MCF 10A (cell line): ENCODE measurements at regions of chr16 and their contacts with region 1.

Region 1: DNA sequence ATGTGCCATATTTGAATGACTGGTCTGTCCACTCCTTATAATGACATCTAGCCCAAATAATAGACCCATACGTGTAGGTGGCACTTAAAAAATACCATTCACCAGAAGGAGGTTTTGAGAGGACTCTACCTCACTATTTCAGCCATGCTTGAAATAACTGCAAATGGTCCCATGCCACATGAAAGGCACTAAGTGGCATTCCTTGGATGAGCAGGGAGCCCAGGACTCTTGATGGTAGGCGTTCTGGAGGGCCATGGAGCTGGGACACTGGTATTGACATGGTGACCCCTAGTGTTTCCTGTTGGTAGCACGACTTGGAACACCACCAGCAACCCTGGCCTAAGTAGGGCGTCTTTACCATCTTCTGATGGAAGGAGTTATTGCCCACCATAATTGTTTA is 148.7 kb upstream of the ZFHX3 start:
- DNase-seq: peak; percentile 85
- H3K4me3 Mint-ChIP-seq: no peak overlapping the region
- H3K27ac Mint-ChIP-seq: no peak overlapping the region
- H3K4me1 Mint-ChIP-seq: no peaks in the 10 kb centered on the region
- H3K27me3 Mint-ChIP-seq: peaks cover 3% of the 10 kb centered on the region
- CTCF ChIP-seq: peak; percentile 79

Region 2: DNA sequence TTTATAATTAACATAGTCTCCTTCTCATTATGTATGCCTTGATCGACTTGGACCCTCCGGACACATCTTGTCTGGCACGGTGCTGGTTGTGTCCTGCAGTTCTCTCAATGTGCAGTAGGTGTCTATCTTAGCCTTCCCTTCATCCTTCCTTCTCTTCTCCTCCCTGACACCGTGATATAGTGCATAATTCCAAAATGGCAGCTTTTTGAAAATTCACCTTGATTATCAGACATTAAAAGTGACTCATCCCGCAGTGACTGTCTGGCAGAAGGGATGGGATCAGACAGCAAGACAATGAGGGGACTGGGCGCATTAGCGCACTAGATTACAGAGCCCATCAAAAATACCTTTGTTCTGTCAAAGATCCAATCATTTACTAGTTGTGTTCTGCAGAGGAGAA is 954.7 kb before region 1 on chr16:
- CTCF ChIA-PET with region 1: interaction called, 3 read pairs
- POLR2A ChIA-PET with region 1: no interaction called
- intact Hi-C with region 1: loop called (anchors 1 kb)
- DNase-seq: peak; percentile 68
- H3K4me3 Mint-ChIP-seq: no peak overlapping the region
- H3K27ac Mint-ChIP-seq: no peak overlapping the region
- H3K4me1 Mint-ChIP-seq: peaks cover 3% of the 10 kb centered on the region
- H3K27me3 Mint-ChIP-seq: no peaks in the 10 kb centered on the region
- CTCF ChIP-seq: peak; percentile 76

Region 3: DNA sequence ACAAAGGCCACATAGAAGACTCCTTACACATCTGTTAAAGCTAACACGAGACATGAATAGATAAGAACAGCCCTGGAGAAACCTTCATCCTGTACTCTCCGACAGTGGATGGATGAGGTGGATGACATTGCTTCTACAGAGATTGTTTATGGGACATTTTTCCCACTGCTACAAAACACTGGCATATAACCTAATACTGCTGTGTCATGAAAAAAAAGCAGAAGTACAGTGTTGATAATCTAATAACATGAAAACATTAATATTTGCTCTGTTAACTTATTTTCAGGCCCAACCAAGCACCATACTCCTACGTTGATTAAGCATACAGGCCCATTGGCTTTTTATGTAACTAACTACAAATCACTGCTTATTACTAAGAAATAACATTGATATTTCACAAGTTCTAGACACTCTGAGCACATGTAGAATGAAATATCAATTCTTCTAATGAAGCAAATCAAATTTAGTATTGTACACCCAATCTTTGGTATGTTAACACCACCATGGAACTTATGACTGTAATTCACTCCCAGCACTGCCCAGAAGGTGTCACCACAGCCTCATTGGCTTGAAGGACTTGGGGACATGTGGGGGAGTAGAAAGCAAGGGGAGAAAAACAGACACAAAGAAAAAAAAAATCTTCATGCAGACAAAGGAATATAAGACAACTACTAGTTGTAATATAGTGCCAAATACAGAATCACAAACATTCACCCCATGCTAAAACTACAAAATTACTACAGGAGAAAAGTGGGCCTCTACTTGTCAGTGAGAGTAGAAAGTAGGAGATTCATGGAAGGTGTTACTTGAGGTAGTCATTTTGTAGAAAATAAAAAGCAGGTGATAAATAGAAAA is 694.7 kb before region 1 on chr16:
- CTCF ChIA-PET with region 1: interaction called, 4 read pairs
- POLR2A ChIA-PET with region 1: no interaction called
- intact Hi-C with region 1: loop called (anchors 1 kb)
- DNase-seq: peak; percentile 71
- H3K4me3 Mint-ChIP-seq: no peak overlapping the region
- H3K27ac Mint-ChIP-seq: no peak overlapping the region
- H3K4me1 Mint-ChIP-seq: peaks cover 6% of the 10 kb centered on the region
- H3K27me3 Mint-ChIP-seq: no peaks in the 10 kb centered on the region
- CTCF ChIP-seq: peak; percentile 93

Region 4: DNA sequence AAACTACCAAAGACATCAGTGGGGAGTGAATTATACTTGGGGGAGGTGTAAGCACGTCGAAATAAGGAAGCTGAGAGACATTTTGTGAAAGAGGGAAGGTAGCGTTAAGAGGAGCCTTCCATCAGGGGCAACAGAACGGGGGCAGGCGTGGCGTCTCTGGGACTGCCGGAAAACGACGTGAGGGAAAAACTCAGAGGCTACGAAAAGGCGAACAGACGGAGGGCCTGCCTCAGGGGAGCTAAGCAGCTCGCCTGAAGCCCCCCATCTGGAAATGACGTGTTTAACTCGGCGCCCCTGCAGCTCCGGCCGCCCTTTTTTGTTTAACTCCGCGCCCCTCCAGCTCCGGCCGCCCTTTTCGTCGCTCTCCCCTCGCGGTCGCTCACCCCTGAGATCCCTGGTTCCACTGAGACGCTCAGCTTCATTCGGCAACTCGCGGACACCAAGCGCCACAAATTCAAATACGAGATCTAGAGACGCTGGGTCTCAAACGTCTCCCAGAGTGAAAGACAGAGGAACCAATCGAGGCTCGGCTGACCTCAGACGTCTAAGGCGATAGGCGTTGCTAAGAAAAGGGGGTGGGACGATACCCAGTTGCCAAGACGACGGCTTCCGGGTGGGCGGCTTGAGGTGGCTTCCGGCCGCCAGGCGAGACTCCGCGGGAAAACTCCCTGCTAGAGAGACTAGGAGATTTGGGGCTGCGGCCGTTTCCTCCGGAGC is 532.0 kb before region 1 on chr16:
- CTCF ChIA-PET with region 1: no interaction called
- POLR2A ChIA-PET with region 1: no interaction called
- intact Hi-C with region 1: loop called (anchors 10 kb)
- DNase-seq: peak; percentile 99
- H3K4me3 Mint-ChIP-seq: peak overlapping the region; percentile 99
- H3K27ac Mint-ChIP-seq: peak overlapping the region; percentile 96
- H3K4me1 Mint-ChIP-seq: no peaks in the 10 kb centered on the region
- H3K27me3 Mint-ChIP-seq: no peaks in the 10 kb centered on the region
- CTCF ChIP-seq: no peak